ENCODE measurements at regions of chr3 and their contacts with region 1.

Region 1: GRCh38 chr3:38004415-38005076 is 14.0 kb downstream of the VILL start:
- DNase-seq: peak; percentile 41 to 50 (median 48)
- H3K4me3 ChIP-seq: no peak overlapping the region
- H3K4me3 Mint-ChIP-seq: peak overlapping the region in 1 of 8 donors; percentile 52
- H3K27ac ChIP-seq: no peak overlapping the region
- H3K27ac Mint-ChIP-seq: peak overlapping the region; percentile 41 to 92 (median 85)
- H3K4me1 ChIP-seq: peaks cover 6% of the 10 kb centered on the region
- H3K4me1 Mint-ChIP-seq: peaks cover 10 to 34% (median 23%) of the 10 kb centered on the region in 4 donors
- H3K27me3 ChIP-seq: no peaks in the 10 kb centered on the region
- H3K27me3 Mint-ChIP-seq: no peaks in the 10 kb centered on the region

Region 2: DNA sequence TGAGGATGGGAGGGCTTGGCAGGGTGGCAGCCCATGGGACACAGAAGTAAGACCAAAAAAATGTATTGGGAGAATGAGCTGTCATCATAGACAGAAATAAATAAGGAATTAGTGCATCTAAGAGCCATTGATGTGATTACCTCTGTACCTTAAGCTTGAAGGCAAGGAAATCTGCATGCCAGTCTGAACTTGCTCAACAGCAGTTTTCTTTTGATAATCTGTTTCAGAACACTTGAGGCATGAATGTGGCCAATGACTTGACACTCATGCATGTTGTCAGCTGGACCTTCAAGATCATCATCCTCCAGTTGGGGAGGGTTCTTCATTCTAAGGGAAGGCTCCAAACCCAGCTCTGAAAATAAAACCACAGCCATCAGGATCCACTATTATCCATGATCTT is 1388.7 kb before region 1 on chr3:
- CTCF ChIA-PET with region 1: no interaction called
- POLR2A ChIA-PET with region 1: no interaction called
- intact Hi-C with region 1: no loop called
- DNase-seq: no peak
- H3K4me3 ChIP-seq: no peak overlapping the region
- H3K4me3 Mint-ChIP-seq: no peak overlapping the region
- H3K27ac ChIP-seq: no peak overlapping the region
- H3K27ac Mint-ChIP-seq: no peak overlapping the region
- H3K4me1 ChIP-seq: no peaks in the 10 kb centered on the region
- H3K4me1 Mint-ChIP-seq: no peaks in the 10 kb centered on the region
- H3K27me3 ChIP-seq: no peaks in the 10 kb centered on the region
- H3K27me3 Mint-ChIP-seq: peaks cover 0 to 4% of the 10 kb centered on the region in 2 donors

Region 3: DNA sequence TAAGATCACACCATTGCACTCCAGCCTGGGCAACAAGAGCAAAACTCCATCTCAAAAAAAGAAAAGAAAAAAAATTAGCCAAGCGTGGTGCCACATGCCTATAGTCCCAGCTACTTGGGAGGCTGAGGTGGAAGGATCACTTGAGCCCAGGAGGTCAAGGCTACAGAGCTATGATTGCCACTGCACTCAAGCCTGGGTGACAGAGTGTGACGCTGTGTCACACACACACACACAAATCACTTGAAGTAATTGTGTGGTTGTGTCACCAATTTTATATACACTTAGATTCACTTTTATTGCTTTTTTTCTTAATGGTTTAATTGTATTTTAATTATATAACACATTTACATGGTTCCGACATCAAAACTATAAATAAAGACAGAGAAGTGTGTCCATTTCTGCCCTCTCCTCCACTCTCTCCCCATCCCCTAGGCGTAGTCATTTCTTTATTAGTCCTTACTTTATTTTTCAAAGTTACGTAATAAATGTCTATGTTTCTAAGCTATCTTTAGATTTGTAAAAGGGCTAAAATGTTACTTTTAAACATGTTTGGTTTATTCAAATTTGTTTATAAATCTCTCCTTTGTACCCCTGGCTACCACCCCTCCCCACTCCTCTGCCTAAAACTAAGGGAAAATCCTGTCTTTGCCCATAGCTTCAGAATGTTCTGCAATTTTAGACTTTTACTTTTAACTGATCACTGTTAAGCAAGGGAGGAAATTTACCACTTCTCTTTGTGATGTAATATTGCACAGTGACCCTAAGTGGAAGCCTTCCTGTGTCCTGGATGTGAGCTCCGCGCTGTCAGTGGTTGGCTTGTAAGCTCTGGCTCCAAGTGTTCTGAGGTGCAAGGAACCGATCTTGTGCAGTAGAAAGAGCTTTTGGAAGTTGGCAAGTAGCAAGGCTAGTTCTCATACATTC is 24.7 kb before region 1 on chr3:
- CTCF ChIA-PET with region 1: interaction called, 146 read pairs
- POLR2A ChIA-PET with region 1: interaction called, 12 read pairs
- intact Hi-C with region 1: no loop called
- DNase-seq: no peak
- H3K4me3 ChIP-seq: no peak overlapping the region
- H3K4me3 Mint-ChIP-seq: no peak overlapping the region
- H3K27ac ChIP-seq: no peak overlapping the region
- H3K27ac Mint-ChIP-seq: no peak overlapping the region
- H3K4me1 ChIP-seq: no peaks in the 10 kb centered on the region
- H3K4me1 Mint-ChIP-seq: peaks cover 1 to 2% (median 1%) of the 10 kb centered on the region in 4 donors
- H3K27me3 ChIP-seq: no peaks in the 10 kb centered on the region
- H3K27me3 Mint-ChIP-seq: peaks cover 0 to 3% of the 10 kb centered on the region in 2 donors

Region 4: DNA sequence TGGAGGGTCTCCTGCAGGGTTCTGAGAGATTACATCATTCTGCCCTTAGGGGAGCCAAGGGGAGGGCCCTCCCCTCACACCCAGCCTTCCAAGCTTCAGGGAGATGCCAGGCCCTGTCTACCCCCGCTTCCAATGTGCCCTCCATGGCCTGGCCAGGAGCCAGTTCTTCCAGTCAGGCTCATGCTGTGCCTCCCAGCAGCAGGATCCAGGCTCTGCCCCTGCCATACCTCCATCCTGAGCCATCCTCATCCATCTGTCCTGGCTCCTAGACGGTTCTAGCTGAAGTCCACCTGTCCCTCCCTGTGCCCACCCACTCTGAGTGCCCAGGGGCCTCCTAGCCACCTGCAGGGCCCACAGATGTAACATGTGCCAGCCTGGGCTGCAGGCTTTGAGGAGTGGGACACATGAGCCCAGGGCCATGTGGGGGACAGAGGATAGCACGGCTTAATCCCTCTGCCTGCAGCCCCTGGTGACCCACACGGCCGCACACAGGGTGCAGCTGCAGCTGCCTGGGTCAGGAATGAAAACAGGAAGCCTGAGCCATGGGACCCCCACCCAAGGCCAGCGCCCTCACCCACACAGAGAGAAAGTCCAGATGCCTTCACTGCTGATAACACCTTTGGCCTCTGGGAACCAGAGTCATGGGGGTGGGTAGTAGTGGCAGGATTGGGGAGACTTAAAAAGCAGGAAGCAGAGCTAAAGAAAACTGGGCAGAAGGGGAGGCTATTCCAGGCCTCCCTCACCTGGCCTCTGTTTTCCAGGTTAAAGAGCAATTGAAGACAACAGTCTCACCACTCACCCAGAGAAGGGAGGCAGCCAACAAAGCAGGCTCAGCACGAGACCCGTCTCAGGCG is 13.1 kb after region 1 on chr3:
- CTCF ChIA-PET with region 1: interaction called, 10 read pairs
- POLR2A ChIA-PET with region 1: interaction called, 7 read pairs
- intact Hi-C with region 1: no loop called
- DNase-seq: no peak
- H3K4me3 ChIP-seq: no peak overlapping the region
- H3K4me3 Mint-ChIP-seq: no peak overlapping the region
- H3K27ac ChIP-seq: no peak overlapping the region
- H3K27ac Mint-ChIP-seq: peak overlapping the region in 2 of 7 donors; percentile 12 to 22
- H3K4me1 ChIP-seq: peaks cover 10% of the 10 kb centered on the region
- H3K4me1 Mint-ChIP-seq: peaks cover 13 to 26% (median 21%) of the 10 kb centered on the region in 4 donors
- H3K27me3 ChIP-seq: no peaks in the 10 kb centered on the region
- H3K27me3 Mint-ChIP-seq: no peaks in the 10 kb centered on the region

Region 5: GRCh38 chr3:38386992-38387750 is 382.6 kb after region 1 on chr3:
- CTCF ChIA-PET with region 1: no interaction called
- POLR2A ChIA-PET with region 1: no interaction called
- intact Hi-C with region 1: no loop called
- DNase-seq: no peak
- H3K4me3 ChIP-seq: no peak overlapping the region
- H3K4me3 Mint-ChIP-seq: no peak overlapping the region
- H3K27ac ChIP-seq: no peak overlapping the region
- H3K27ac Mint-ChIP-seq: peak overlapping the region in 1 of 7 donors; percentile 51
- H3K4me1 ChIP-seq: no peaks in the 10 kb centered on the region
- H3K4me1 Mint-ChIP-seq: no peaks in the 10 kb centered on the region
- H3K27me3 ChIP-seq: no peaks in the 10 kb centered on the region
- H3K27me3 Mint-ChIP-seq: no peaks in the 10 kb centered on the region

Measured in CD4-positive, alpha-beta memory T cell (primary cell).